Left cardiac atrium (tissue), 4 donors: ENCODE measurements at regions of chr1 and their contacts with region 1.

Region 1: GRCh38 chr1:158414651-158415345 is 11.2 kb downstream of the OR10K2 start:
- DNase-seq: no peak
- ATAC-seq: no peak

Region 2: DNA sequence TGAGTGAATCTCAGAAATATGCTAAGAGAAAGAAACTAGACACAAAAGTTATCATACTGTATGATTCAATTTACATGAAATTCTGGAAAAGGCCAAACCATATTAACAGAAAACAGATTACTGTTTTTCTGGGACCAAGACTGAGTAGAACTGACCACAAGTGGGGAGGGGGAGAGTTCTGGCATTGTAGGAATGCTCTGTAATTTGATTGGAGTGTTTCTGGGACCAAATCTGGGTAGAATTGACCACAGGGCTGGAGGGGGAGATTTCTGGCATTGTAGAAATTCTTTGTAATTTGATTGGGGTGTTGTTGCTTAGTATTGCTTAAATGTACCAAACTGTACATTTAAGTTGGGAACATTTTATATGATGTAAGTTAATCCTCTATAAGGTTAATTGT is 43.5 kb after region 1 on chr1:
- intact Hi-C with region 1: loop called in 1 of 2 experiments (anchors 2 kb)
- DNase-seq: no peak
- ATAC-seq: no peak

Region 3: DNA sequence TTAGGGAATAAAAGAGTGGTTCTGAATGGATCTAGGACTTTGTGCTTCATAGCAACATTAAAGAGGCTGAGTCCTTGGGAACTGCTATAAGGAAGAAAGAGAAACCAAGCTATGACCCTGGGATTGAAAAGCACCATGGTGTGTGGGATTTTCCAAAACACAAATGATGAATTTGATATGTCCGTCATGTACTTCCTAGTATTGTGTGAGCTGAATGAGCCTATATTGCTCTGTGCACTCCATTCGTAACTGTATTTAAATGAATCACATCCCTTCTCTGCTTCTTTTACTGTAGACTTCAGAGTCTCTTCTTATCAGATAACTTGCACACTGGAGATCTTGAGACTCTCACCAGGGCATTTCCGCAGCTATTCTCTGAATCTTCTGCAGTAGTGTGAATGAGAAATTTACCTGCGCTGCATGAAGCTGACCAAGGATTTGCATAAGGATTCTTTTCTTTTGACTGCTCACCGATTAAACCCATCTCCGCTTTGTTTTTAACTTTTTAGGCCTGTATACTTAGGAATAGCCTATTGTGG is 994.1 kb after region 1 on chr1:
- intact Hi-C with region 1: no loop called
- DNase-seq: no peak
- ATAC-seq: no peak